ENCODE measurements at regions of chr1 and their contacts with region 1.

Region 1: DNA sequence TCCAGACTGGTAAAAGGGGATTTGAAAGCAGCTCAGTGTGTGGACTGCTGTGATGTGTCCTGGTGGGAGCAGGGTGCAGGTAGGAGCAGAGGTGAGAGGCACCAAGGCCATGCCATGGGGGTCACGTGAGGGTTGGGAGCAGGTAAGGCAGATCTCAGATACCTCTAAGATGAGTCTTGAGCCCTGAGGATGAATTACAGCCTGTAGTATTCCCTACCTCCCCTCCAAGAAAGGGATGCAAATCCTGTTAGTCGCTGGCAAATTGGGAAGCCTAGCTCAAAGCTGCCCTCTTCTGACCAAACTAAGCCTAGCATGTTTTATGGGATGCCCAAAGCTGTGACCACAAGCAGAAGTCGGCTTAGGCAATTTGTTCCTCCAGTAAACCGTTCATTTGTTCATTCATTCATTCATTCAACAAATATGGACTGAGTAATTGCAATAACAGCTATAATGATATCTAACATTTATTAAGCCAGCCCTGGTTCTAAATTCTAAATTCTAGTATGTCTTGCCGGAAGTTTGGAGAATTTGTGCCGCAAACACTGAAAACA is 3.9 kb upstream of the NUAK2 start:
- DNase-seq: no peak
- H3K4me3 ChIP-seq: no peak overlapping the region
- H3K27ac ChIP-seq: no peak overlapping the region
- H3K4me1 ChIP-seq: peaks cover 0 to 24% (median 3%) of the 10 kb centered on the region in 3 donors
- H3K27me3 ChIP-seq: peaks cover 0 to 33% (median 0%) of the 10 kb centered on the region in 4 donors
- CTCF ChIP-seq: peak; percentile 62 to 86 (median 72)
- POLR2A ChIP-seq: no peak

Region 2: GRCh38 chr1:205273551-205273982 is 51.8 kb before region 1 on chr1:
- intact Hi-C with region 1: loop called (anchors 2 kb)
- DNase-seq: no peak
- H3K4me3 ChIP-seq: no peak overlapping the region
- H3K27ac ChIP-seq: no peak overlapping the region
- H3K4me1 ChIP-seq: peaks cover 21 to 75% (median 26%) of the 10 kb centered on the region in 3 donors
- H3K27me3 ChIP-seq: no peaks in the 10 kb centered on the region
- CTCF ChIP-seq: peak; percentile 98 to 99 (median 98)
- POLR2A ChIP-seq: no peak

Region 3: DNA sequence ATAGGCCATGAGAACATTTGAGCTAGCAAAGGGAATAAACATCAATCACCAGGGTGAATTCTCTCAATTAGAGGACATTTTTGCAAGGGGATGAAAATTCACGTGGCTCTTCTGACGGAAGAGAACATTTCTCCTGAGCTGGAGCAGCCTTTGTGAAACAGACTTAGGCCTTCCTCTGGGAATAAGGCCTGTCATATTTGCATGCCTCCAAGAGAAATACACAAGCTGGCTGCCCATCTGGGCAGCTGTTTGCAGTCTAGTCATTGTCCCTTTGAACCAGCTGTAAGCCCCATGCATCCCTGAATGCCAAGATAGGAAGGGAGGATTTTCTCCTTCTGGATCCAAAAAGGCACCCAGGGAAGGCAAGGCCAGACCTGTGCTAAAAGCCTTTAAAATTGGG is 90.9 kb after region 1 on chr1:
- intact Hi-C with region 1: no loop called
- DNase-seq: no peak
- H3K4me3 ChIP-seq: no peak overlapping the region
- H3K27ac ChIP-seq: no peak overlapping the region
- H3K4me1 ChIP-seq: peaks cover 0 to 6% (median 0%) of the 10 kb centered on the region in 3 donors
- H3K27me3 ChIP-seq: peaks cover 0 to 18% (median 0%) of the 10 kb centered on the region in 4 donors
- CTCF ChIP-seq: no peak
- POLR2A ChIP-seq: no peak

Measured in esophagus squamous epithelium (tissue), 5 donors.